ENCODE measurements at regions of chr1 and their contacts with region 1.

Region 1: GRCh38 chr1:151739590-151740375 is 18.5 kb downstream of the RIIAD1 start:
- DNase-seq: peak in 2 of 4 experiments; percentile 73 to 78
- ATAC-seq: peak; percentile 37
- H3K4me3 ChIP-seq: no peak overlapping the region
- H3K27ac ChIP-seq: 0 out of 3 replicates have a peak overlapping the region, but pooled peaks have one; percentile 12
- H3K4me1 ChIP-seq: peaks cover 4 to 9% of the 10 kb centered on the region in 2 experiments; a peak in 4 of 5 replicates
- H3K27me3 ChIP-seq: no peaks in the 10 kb centered on the region
- CTCF ChIP-seq: no peak
- EP300 ChIP-seq: peak; percentile 75
- POLR2A ChIP-seq: no peak
- RAD21 ChIP-seq: no peak

Region 2: DNA sequence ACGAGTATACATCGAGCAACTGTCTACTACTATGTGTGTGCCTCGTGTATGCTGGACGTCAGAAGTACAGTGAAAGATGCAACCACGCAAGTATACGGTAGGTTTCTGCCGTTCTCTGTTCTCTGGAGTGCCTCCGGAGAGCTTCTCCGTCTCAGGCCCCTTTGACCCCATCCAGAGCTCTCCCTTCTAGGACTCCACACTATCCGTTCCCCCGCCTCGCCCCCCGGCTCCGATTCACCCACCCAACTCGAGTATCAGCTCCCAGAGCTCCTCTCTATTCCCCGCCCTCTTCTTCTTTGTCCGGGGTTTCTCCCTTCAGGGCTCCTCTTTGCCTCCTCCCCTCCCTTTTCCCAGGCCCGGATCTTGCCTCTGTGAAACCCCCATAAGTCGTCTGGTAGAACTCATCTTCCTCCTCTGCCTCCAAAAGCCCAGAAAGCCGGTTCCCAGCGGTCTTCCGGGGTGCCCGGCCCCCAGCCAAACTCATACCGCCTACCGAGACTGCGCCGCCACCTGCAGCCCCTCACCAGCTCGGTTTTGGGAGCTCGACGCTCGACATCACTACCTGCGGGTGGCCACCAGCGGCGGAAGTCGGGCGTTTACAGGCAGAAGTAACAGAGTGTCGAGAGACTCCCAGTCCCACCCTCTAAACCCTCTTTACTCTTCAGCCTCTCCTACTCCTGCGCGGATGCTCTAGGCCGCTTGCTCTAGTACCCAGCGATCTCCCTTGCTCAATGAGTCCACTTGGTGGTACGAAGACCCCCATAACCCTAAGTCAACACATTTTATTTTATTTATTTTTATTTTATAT is 549.9 kb before region 1 on chr1 and contains the start of gene VPS72:
- CTCF ChIA-PET with region 1: no interaction called
- POLR2A ChIA-PET with region 1: no interaction called
- in situ Hi-C with region 1: no loop called
- intact Hi-C with region 1: loop called (anchors 5 kb)
- DNase-seq: peak; percentile 91 to 95 (median 92)
- ATAC-seq: peak; percentile 92
- H3K4me3 ChIP-seq: peak within 1 kb of the TSS; percentile 71
- H3K27ac ChIP-seq: peak within 1 kb of the TSS; percentile 74
- H3K4me1 ChIP-seq: peaks cover 8% of the 10 kb centered on the region in 2 experiments; a peak in 4 of 5 replicates
- H3K27me3 ChIP-seq: no peaks in the 10 kb centered on the region
- CTCF ChIP-seq: 0 out of 6 replicates have a peak, but pooled peaks of 1 of the 3 experiments have one; percentile 3
- EP300 ChIP-seq: peak; percentile 32
- POLR2A ChIP-seq: peak; percentile 91
- RAD21 ChIP-seq: no peak
- polyA plus RNA-seq, gene VPS72: 7.2 to 21.9 TPM

Region 3: DNA sequence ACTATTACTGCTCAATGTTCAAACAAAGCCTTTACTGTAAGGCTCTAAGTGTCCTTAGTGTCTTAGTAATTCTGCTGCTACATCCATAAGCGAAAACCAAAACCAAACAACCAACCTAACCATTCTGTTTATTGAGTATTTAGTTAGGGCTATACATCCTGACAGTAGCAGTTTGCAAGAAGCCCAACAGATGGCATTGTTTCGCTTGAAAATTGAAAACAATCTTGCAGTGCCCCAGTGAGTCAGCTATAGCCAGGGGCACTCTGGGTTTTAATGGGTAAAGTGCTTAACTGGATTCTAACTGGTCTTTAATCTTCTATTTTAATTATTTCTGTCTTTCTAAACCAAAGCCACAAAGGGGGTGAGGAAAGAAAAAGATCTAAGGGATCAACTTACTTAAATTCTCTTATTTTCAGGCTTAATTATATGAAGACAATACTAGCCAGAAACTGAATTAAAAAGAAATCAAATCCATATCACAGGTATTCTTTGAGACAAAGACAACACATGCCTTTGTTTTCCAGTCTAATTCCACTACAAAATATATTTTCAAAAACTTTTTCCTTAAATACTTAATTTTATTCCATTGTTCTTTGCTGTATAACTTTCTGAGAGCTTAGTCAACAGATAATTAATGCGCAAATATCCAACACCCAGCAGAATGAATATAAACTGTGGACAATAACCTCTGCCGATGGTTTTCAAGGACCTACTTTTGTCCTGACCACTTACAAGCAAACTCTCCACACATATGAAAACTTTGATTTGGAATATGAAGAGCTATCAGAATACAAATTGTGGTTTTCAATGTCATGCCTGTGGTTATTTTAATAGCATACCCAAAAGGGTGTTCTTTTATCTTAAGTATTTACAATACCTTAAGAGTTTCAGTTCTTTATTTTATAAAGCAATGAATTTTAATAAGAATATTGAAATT is 295.7 kb before region 1 on chr1:
- CTCF ChIA-PET with region 1: interaction called, 8 read pairs
- POLR2A ChIA-PET with region 1: no interaction called
- in situ Hi-C with region 1: loop called (anchors 10 kb)
- intact Hi-C with region 1: loop called (anchors 2 kb)
- DNase-seq: peak; percentile 54 to 73 (median 62)
- ATAC-seq: peak; percentile 96
- H3K4me3 ChIP-seq: no peak overlapping the region
- H3K27ac ChIP-seq: no peak overlapping the region
- H3K4me1 ChIP-seq: peaks cover 0 to 3% of the 10 kb centered on the region in 2 experiments; a peak in 2 of 5 replicates
- H3K27me3 ChIP-seq: no peaks in the 10 kb centered on the region
- CTCF ChIP-seq: peak; percentile 71 to 88 (median 78)
- EP300 ChIP-seq: no peak
- POLR2A ChIP-seq: no peak
- RAD21 ChIP-seq: peak; percentile 82 to 83

Region 4: GRCh38 chr1:151539990-151540981 is 199.5 kb before region 1 on chr1 and contains the start of gene TUFT1:
- CTCF ChIA-PET with region 1: interaction called, 3 read pairs
- POLR2A ChIA-PET with region 1: interaction called, 4 read pairs
- in situ Hi-C with region 1: loop called (anchors 5 kb)
- intact Hi-C with region 1: no loop called
- DNase-seq: peak; percentile 94 to 97 (median 96)
- ATAC-seq: peak; percentile 98
- H3K4me3 ChIP-seq: peak within 1 kb of the TSS; percentile 52
- H3K27ac ChIP-seq: peak within 1 kb of the TSS; percentile 70
- H3K4me1 ChIP-seq: peaks cover 5 to 14% of the 10 kb centered on the region in 2 experiments; a peak in 4 of 5 replicates
- H3K27me3 ChIP-seq: peaks cover 2 to 5% of the 10 kb centered on the region in 2 experiments; a peak in 2 of 5 replicates
- CTCF ChIP-seq: no peak
- EP300 ChIP-seq: no peak
- POLR2A ChIP-seq: peak; percentile 75
- RAD21 ChIP-seq: no peak
- polyA plus RNA-seq, gene TUFT1: 1.7 to 2.0 TPM

Region 5: DNA sequence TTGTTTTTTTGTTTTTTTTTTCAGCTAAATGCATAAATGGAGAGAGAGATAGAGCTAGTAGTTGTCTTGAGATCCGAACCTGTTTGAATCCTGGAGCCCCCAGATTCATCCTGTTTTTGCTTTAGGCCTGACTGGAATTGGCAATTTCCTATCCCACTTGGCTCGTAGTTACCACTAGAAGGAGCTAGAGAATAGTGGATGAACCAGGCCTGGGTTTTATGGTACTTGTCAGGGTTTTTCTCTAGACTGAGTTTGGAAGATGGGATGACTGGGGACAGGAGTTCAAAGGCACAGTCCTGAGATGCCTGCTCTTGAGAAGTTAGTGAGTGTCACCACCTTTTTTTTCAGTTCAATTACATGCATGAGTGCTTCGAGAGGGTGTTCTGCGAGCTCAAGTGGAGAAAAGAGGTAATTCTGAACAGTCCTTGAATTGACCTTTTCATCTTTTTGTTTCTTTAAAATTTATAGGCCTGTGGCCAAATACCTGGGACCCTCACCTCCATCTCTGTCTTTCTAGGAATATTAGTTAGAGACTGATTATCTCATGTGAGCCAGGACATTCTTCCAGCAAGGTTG is 46.6 kb before region 1 on chr1:
- CTCF ChIA-PET with region 1: interaction called, 4 read pairs
- POLR2A ChIA-PET with region 1: interaction called, 3 read pairs
- in situ Hi-C with region 1: no loop called
- intact Hi-C with region 1: loop called (anchors 2 kb)
- DNase-seq: peak in 2 of 4 experiments; percentile 32 to 40
- ATAC-seq: peak; percentile 74
- H3K4me3 ChIP-seq: no peak overlapping the region
- H3K27ac ChIP-seq: no peak overlapping the region
- H3K4me1 ChIP-seq: no peaks in the 10 kb centered on the region
- H3K27me3 ChIP-seq: no peaks in the 10 kb centered on the region
- CTCF ChIP-seq: peak; percentile 74 to 80 (median 78)
- EP300 ChIP-seq: no peak
- POLR2A ChIP-seq: no peak
- RAD21 ChIP-seq: peak; percentile 69 to 85

Region 6: DNA sequence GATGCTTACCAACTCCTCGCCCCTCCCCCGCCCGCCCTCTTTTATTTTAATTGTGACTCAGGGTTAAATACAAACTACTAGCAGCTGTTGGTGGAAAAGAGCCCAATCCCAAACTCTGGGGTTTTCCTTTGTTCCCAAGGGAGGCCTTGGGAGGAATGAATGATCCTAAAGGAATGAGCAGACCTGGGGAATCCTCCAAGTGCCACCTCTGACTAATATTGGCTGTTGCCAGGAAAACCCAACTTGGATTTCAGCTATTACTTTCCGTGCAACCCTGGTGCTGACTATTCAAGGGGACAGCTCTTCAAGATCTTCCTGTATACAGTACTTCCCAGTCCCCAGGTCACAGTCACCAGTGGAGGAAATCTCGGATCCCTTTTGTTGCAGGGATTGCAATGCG is 255.2 kb after region 1 on chr1:
- CTCF ChIA-PET with region 1: no interaction called
- POLR2A ChIA-PET with region 1: no interaction called
- in situ Hi-C with region 1: no loop called
- intact Hi-C with region 1: loop called (anchors 5 kb)
- DNase-seq: no peak
- ATAC-seq: no peak
- H3K4me3 ChIP-seq: no peak overlapping the region
- H3K27ac ChIP-seq: no peak overlapping the region
- H3K4me1 ChIP-seq: peaks cover 15 to 26% of the 10 kb centered on the region in 2 experiments
- H3K27me3 ChIP-seq: peaks cover 25 to 41% of the 10 kb centered on the region in 2 experiments
- CTCF ChIP-seq: no peak
- EP300 ChIP-seq: no peak
- POLR2A ChIP-seq: no peak
- RAD21 ChIP-seq: no peak